ENCODE measurements at regions of chr9 and their contacts with region 1.

Region 1: DNA sequence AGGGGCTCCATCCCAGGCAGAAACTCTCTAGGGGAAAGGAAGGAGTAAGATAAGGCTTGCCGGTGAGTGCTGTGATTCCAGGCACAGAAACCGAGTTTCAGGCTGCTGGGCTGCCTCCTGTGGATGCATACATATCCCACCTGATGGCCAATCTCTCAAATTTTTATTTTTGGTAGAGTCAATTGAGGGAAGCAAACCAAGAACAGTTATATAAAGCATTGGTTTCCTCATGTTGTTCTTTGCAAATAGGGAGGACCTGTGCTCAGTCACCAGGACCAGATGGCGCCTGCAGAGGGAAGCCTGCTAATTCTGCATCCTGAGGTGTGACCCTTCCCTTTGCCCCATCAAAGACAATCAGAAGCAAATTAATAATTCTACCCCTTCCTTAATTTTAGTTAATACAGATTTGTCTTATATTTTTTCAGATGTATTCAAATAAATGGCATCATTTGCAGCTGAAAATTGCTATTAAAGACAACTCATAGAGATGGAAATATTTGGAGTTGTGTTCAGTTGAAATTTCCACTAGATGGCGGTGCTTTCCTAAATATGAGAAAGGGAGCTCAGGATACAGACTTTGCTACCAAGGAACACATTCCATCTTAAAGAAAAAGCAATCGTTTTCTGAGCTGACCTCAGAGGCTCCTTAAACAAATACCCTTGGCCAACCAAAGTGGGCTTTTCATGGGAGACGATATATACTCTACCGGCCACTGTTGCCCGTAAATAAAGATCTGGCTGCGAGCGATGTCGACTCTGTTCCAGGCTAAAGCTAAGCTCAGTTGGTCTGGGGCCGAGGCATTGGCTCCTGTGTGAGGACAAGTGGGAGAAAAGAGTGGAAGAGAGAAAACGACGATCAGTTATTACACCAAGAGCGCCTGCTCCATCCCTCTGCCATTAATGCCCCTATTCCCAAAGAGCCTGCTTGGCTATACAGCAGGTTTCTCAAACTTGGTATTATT is 225.7 kb upstream of the KLF9 start:
- DNase-seq: no peak
- ATAC-seq: peak; percentile 75
- H3K4me3 ChIP-seq: no peak overlapping the region
- H3K27ac ChIP-seq: no peak overlapping the region
- H3K4me1 ChIP-seq: no peaks in the 10 kb centered on the region
- H3K27me3 ChIP-seq: no peaks in the 10 kb centered on the region
- CTCF ChIP-seq: peak; percentile 0 to 64 (median 47); a peak in 4 of 6 replicates
- EP300 ChIP-seq: no peak
- POLR2A ChIP-seq: no peak
- RAD21 ChIP-seq: peak; percentile 67

Region 2: DNA sequence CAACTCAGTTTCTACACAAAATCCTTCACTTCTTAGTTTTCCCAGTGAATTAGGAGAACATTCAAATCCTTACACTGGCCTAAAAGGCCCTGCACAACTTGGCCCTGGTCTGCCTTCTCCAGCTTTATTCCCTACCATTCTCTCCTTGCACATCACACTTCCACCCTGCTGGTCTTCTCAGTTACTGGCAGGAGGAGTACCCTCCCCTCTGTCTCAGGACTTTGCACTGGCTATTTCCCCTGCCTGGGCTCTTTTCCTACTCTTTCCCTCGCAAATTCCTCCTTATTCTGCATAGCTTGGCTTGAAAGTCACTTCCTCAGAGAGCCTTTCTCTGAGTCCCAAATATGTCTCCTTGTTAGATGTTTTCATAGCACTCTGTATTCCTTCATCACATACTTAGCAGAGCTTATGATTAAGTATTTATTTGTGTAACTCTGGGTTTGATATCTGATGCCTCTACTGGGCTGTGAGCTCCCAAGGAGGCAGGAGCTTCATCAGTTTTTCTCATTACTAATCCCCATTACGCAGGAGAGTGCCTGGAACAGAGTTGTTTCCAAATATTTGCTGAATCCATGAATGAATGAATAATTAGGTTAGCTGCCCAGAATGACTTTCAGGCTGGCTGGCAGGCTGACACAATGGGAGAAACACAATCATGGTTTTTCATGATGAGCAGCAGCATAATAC is 65.8 kb before region 1 on chr9:
- CTCF ChIA-PET with region 1: no interaction called
- POLR2A ChIA-PET with region 1: no interaction called
- RAD21 ChIA-PET with region 1: no interaction called
- SMC1A ChIA-PET with region 1: no interaction called
- in situ Hi-C with region 1: no loop called
- intact Hi-C with region 1: no loop called
- DNase-seq: no peak
- ATAC-seq: no peak
- H3K4me3 ChIP-seq: no peak overlapping the region
- H3K27ac ChIP-seq: no peak overlapping the region
- H3K4me1 ChIP-seq: no peaks in the 10 kb centered on the region
- H3K27me3 ChIP-seq: no peaks in the 10 kb centered on the region
- CTCF ChIP-seq: no peak
- EP300 ChIP-seq: no peak
- POLR2A ChIP-seq: no peak
- RAD21 ChIP-seq: no peak

Region 3: DNA sequence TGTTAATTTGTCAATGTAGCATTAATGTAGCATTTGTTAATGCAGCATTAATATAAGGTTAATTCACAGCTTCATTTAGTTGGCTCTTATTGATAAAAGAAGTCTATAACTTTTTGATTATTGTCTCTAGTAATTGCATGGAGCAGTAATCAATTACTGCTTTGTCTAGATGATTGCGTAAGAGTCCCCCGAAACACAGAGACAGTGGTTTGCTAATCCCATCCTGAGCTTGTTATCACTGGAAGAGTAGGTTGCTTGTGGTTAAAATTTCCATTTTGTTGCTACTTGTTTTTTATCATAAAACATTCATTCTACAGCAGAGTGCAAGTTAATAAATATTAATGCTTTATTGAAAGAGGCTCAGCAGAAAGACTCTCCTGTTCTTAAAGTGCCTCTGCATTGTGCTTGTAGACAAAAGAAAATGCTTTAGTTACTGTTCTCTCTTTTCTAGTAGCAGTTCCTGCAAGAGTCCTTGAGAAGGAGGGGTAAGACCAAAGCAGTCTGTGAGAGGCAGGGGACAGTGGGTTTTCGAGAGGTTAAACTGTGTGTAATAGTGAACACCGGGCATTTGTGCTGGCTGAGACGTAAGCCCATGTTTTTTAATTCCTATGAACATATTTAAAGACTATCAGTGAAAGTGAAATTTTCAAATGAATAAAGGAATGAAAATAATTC is 189.6 kb after region 1 on chr9:
- CTCF ChIA-PET with region 1: interaction called, 3 read pairs
- POLR2A ChIA-PET with region 1: no interaction called
- RAD21 ChIA-PET with region 1: no interaction called
- SMC1A ChIA-PET with region 1: no interaction called
- in situ Hi-C with region 1: no loop called
- intact Hi-C with region 1: loop called (anchors 10 kb)
- DNase-seq: no peak
- ATAC-seq: no peak
- H3K4me3 ChIP-seq: no peak overlapping the region
- H3K27ac ChIP-seq: no peak overlapping the region
- H3K4me1 ChIP-seq: no peaks in the 10 kb centered on the region
- H3K27me3 ChIP-seq: no peaks in the 10 kb centered on the region; a peak in 1 of 4 replicates
- CTCF ChIP-seq: no peak
- EP300 ChIP-seq: no peak
- POLR2A ChIP-seq: no peak
- RAD21 ChIP-seq: no peak

Region 4: GRCh38 chr9:70868661-70869652 is 228.8 kb after region 1 on chr9:
- CTCF ChIA-PET with region 1: no interaction called
- POLR2A ChIA-PET with region 1: no interaction called
- RAD21 ChIA-PET with region 1: no interaction called
- SMC1A ChIA-PET with region 1: no interaction called
- in situ Hi-C with region 1: no loop called
- intact Hi-C with region 1: loop called (anchors 10 kb)
- DNase-seq: no peak
- ATAC-seq: no peak
- H3K4me3 ChIP-seq: no peak overlapping the region
- H3K27ac ChIP-seq: no peak overlapping the region
- H3K4me1 ChIP-seq: no peaks in the 10 kb centered on the region
- H3K27me3 ChIP-seq: no peaks in the 10 kb centered on the region; a peak in 1 of 4 replicates
- CTCF ChIP-seq: no peak
- EP300 ChIP-seq: no peak
- POLR2A ChIP-seq: no peak
- RAD21 ChIP-seq: no peak

Region 5: GRCh38 chr9:70924895-70925547 is 284.9 kb after region 1 on chr9:
- CTCF ChIA-PET with region 1: interaction called, 4 read pairs
- POLR2A ChIA-PET with region 1: no interaction called
- RAD21 ChIA-PET with region 1: no interaction called
- SMC1A ChIA-PET with region 1: no interaction called
- in situ Hi-C with region 1: no loop called
- intact Hi-C with region 1: loop called (anchors 10 kb)
- DNase-seq: no peak
- ATAC-seq: peak; percentile 89
- H3K4me3 ChIP-seq: no peak overlapping the region
- H3K27ac ChIP-seq: no peak overlapping the region
- H3K4me1 ChIP-seq: no peaks in the 10 kb centered on the region
- H3K27me3 ChIP-seq: no peaks in the 10 kb centered on the region
- CTCF ChIP-seq: peak; percentile 65 to 80 (median 72)
- EP300 ChIP-seq: no peak
- POLR2A ChIP-seq: no peak
- RAD21 ChIP-seq: peak; percentile 62

Region 6: GRCh38 chr9:71001780-71002386 is 361.7 kb after region 1 on chr9:
- CTCF ChIA-PET with region 1: interaction called, 57 read pairs
- POLR2A ChIA-PET with region 1: no interaction called
- RAD21 ChIA-PET with region 1: interaction called, 18 read pairs
- SMC1A ChIA-PET with region 1: interaction called, 8 read pairs
- in situ Hi-C with region 1: loop called (anchors 5 kb)
- intact Hi-C with region 1: loop called (anchors 1 kb)
- DNase-seq: no peak
- ATAC-seq: peak; percentile 74
- H3K4me3 ChIP-seq: no peak overlapping the region
- H3K27ac ChIP-seq: no peak overlapping the region
- H3K4me1 ChIP-seq: no peaks in the 10 kb centered on the region
- H3K27me3 ChIP-seq: no peaks in the 10 kb centered on the region
- CTCF ChIP-seq: peak; percentile 52 to 56 (median 54)
- EP300 ChIP-seq: no peak
- POLR2A ChIP-seq: no peak
- RAD21 ChIP-seq: peak; percentile 46

Region 7: GRCh38 chr9:71249729-71250317 is 609.7 kb after region 1 on chr9:
- CTCF ChIA-PET with region 1: interaction called, 46 read pairs
- POLR2A ChIA-PET with region 1: no interaction called
- RAD21 ChIA-PET with region 1: no interaction called
- SMC1A ChIA-PET with region 1: interaction called, 11 read pairs
- in situ Hi-C with region 1: loop called (anchors 10 kb)
- intact Hi-C with region 1: loop called (anchors 1 kb)
- DNase-seq: no peak
- ATAC-seq: peak; percentile 87
- H3K4me3 ChIP-seq: no peak overlapping the region
- H3K27ac ChIP-seq: no peak overlapping the region
- H3K4me1 ChIP-seq: no peaks in the 10 kb centered on the region
- H3K27me3 ChIP-seq: no peaks in the 10 kb centered on the region
- CTCF ChIP-seq: peak; percentile 46 to 71 (median 63); a peak in 5 of 6 replicates
- EP300 ChIP-seq: no peak
- POLR2A ChIP-seq: no peak
- RAD21 ChIP-seq: peak; percentile 49